Sigmoid colon (tissue), 7 donors: ENCODE measurements at regions of chr19 and their contacts with region 1.

Region 1: GRCh38 chr19:18328340-18329034 is 5.6 kb upstream of the LSM4 start:
- DNase-seq: peak; percentile 98
- H3K4me3 ChIP-seq: peak overlapping the region in 3 of 4 donors; percentile 22 to 31 (median 23)
- H3K27ac ChIP-seq: peak overlapping the region; percentile 64 to 82 (median 80)
- H3K4me1 ChIP-seq: peaks cover 0 to 22% (median 19%) of the 10 kb centered on the region in 4 donors
- H3K27me3 ChIP-seq: no peaks in the 10 kb centered on the region
- CTCF ChIP-seq: peak; percentile 83 to 100 (median 92)
- EP300 ChIP-seq: no peak
- POLR2A ChIP-seq: peak in 1 of 2 donors; percentile 48

Region 2: DNA sequence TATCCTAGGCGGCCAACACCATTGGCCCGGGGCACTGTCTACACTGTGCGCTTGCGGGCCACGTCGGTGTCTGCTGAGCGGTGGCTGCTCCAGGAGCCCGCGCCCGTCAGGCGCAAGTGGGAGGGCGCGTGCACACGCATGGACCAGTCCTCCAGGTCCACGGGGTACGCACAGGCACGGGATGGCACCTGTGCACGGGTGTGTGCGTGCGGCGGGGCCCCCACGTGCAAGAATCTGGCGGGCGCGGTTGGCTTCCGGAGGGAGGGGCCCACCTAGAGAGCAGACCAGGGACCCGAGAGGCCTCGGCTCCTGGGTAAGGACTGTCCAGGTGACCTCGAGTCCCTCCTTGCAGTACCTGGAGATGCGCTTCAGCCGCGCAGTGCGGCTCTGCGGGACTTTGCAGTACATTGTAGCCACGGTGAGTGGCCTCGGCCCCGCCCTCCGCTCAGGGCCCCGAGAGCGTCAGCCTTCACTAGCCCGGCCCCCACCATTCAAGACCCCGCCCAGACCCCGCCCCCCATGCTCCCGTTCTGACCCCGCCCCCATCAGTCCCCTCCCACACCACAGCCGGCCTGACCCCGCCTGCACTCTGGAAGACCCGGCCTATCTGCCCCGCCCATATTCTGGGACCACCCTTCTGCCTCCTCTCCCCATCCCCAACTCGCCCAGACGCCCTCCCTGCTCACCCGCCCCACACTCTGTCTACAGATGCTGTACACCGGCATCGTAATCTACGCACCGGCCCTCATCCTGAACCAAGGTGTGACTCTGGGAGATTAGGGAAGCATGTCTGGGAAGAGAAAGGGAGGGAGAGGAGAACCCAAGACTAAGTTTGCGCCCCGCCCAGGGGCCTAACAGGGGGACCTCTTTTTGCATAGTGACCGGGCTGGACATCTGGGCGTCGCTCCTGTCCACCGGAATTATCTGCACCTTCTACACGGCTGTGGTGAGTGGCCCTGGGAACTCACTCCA is 454.4 kb before region 1 on chr19:
- intact Hi-C with region 1: no loop called
- DNase-seq: no peak
- H3K4me3 ChIP-seq: no peak overlapping the region
- H3K27ac ChIP-seq: no peak overlapping the region
- H3K4me1 ChIP-seq: peaks cover 0 to 22% (median 20%) of the 10 kb centered on the region in 4 donors
- H3K27me3 ChIP-seq: peaks cover 38 to 80% (median 62%) of the 10 kb centered on the region in 3 donors
- CTCF ChIP-seq: no peak
- EP300 ChIP-seq: no peak
- POLR2A ChIP-seq: no peak

Region 3: GRCh38 chr19:18291590-18292461 is 36.7 kb before region 1 on chr19:
- intact Hi-C with region 1: loop called (anchors 5 kb)
- DNase-seq: peak; percentile 96
- H3K4me3 ChIP-seq: peak overlapping the region; percentile 62 to 94 (median 74)
- H3K27ac ChIP-seq: peak overlapping the region; percentile 96 to 100 (median 98)
- H3K4me1 ChIP-seq: peaks cover 0 to 38% (median 34%) of the 10 kb centered on the region in 4 donors
- H3K27me3 ChIP-seq: no peaks in the 10 kb centered on the region
- CTCF ChIP-seq: no peak
- EP300 ChIP-seq: peak in 3 of 4 donors; percentile 8 to 65 (median 55)
- POLR2A ChIP-seq: peak; percentile 86 to 88

Region 4: DNA sequence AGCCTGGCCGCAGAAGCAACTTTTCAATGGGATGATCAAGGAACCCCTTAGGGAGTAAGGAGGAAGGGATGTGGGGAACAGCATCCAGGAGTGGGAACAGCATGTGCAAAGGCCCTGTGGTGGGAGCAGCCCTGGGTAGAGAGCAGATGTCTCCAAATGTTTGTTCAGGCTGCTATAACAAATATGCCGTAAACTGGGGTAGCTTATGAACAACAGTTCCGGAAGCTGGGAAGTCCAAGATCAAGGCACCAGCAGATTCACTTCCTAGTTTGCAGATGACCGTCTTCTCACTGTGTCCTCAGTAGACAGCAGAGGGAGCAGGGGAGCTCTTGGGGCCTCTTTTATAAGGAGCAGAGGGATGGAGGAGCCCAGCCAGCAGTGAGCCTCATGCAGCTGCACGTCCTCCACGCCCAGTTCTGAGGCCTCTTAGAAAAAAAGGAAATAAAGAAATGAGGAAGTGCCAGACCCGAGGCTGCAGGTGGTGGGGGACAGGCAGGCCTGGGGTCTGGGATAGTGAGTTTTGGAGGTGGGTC is 73.2 kb after region 1 on chr19:
- intact Hi-C with region 1: no loop called
- DNase-seq: peak; percentile 84
- H3K4me3 ChIP-seq: no peak overlapping the region
- H3K27ac ChIP-seq: peak overlapping the region in 3 of 4 donors; percentile 27 to 47 (median 39)
- H3K4me1 ChIP-seq: peaks cover 0 to 10% (median 0%) of the 10 kb centered on the region in 4 donors
- H3K27me3 ChIP-seq: peaks cover 8 to 17% (median 11%) of the 10 kb centered on the region in 3 donors
- CTCF ChIP-seq: peak in 1 of 4 experiments; percentile 17
- EP300 ChIP-seq: no peak
- POLR2A ChIP-seq: no peak